ENCODE measurements at regions of chr6 and their contacts with region 1.

Region 1: GRCh38 chr6:113649276-113649675 is 207.9 kb upstream of the MARCKS start:
- DNase-seq: no peak
- ATAC-seq: no peak
- H3K4me3 ChIP-seq: peak overlapping the region in 2 of 5 experiments; percentile 25 to 30
- H3K4me3 Mint-ChIP-seq: peak overlapping the region; percentile 68
- H3K27ac ChIP-seq: peak overlapping the region; percentile 12 to 17
- H3K27ac Mint-ChIP-seq: peak overlapping the region; percentile 68
- H3K4me1 ChIP-seq: peaks cover 53 to 57% of the 10 kb centered on the region in 2 donors
- H3K4me1 Mint-ChIP-seq: peaks cover 76% of the 10 kb centered on the region
- H3K27me3 ChIP-seq: no peaks in the 10 kb centered on the region
- H3K27me3 Mint-ChIP-seq: no peaks in the 10 kb centered on the region
- CTCF ChIP-seq: no peak

Region 2: DNA sequence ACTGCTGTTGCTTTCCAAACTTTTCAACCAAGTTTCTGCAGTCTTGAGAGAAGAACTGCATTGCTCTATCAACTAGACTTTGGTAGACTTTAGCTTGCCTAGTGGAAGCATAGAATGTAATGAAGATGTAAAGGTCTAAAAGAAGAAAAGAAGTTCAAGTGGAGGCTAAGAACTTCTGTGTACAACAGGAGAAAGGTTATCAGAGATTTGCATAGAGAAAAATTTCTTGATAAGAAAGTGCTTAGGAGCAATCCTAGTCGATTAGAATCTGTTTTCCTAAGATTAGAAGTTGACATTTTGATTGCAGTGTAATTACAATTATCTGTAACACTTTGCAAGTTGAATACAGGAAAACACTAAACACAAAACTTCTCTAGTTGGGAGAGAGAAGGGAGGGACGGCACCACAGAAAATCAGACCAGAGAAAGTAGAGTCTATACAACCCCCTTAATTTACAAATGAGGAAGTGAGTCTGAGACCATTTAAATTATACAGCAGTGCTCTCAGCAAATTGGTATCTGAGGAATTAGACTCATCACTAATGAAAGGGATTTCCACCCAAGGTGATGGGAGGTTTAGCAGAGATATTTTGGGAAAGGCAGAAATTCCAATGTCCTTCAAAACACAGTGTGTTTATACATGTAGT is 13.5 kb after region 1 on chr6:
- CTCF ChIA-PET with region 1: interaction called, 4 read pairs
- POLR2A ChIA-PET with region 1: interaction called, 3 read pairs
- intact Hi-C with region 1: loop called (anchors 2 kb)
- DNase-seq: peak; percentile 44
- ATAC-seq: peak; percentile 71
- H3K4me3 ChIP-seq: peak overlapping the region in 1 of 5 experiments; percentile 18
- H3K4me3 Mint-ChIP-seq: peak overlapping the region; percentile 13
- H3K27ac ChIP-seq: no peak overlapping the region
- H3K27ac Mint-ChIP-seq: no peak overlapping the region
- H3K4me1 ChIP-seq: peaks cover 10 to 11% of the 10 kb centered on the region in 2 donors
- H3K4me1 Mint-ChIP-seq: peaks cover 13% of the 10 kb centered on the region
- H3K27me3 ChIP-seq: no peaks in the 10 kb centered on the region
- H3K27me3 Mint-ChIP-seq: no peaks in the 10 kb centered on the region
- CTCF ChIP-seq: no peak